ENCODE measurements at regions of chr19 and their contacts with region 1.

Region 1: GRCh38 chr19:54248016-54248601 is 5.5 kb upstream of the LILRA6 start:
- H3K4me3 Mint-ChIP-seq: peak overlapping the region; percentile 64
- H3K27ac Mint-ChIP-seq: peak overlapping the region; percentile 91
- H3K4me1 Mint-ChIP-seq: peaks cover 69% of the 10 kb centered on the region
- H3K27me3 Mint-ChIP-seq: peaks cover 16% of the 10 kb centered on the region

Region 2: DNA sequence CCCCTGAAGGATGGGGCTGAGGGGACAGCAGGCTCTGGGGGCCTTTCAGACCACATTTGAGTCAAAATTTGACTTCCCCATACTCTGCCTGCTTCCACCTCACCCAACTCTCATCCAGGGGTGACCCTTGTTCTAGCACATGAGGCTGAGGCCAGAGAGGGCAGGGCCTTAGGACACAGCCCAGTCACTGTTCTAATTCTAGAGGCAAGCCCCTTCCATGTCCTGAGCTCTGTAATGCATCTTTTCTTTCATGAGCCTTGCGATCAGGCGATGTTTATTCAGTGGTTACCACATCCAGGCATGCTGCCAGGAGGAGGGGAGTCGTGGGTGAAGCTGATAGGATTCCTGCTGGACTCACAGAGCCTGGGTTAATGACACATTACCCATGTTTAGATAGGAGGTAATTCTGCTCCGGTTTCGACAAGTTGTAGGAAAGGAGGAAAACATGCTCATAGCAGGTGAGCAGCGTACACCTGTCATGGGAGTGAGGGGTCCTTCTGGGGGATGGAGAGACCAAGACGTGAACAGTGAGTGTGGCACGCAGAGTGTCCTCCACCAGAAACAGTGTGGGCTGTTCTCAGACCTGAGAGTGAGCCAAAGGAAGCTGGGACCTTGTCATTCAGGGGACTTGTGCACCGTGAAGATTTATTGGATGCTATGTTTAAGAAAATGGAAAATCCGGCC is 38.2 kb before region 1 on chr19:
- intact Hi-C with region 1: loop called (anchors 5 kb)
- H3K4me3 Mint-ChIP-seq: peak overlapping the region; percentile 61
- H3K27ac Mint-ChIP-seq: peak overlapping the region; percentile 94
- H3K4me1 Mint-ChIP-seq: peaks cover 80% of the 10 kb centered on the region
- H3K27me3 Mint-ChIP-seq: no peaks in the 10 kb centered on the region

Region 3: GRCh38 chr19:54218960-54219661 is 29.0 kb before region 1 on chr19:
- intact Hi-C with region 1: loop called (anchors 2 kb)
- H3K4me3 Mint-ChIP-seq: no peak overlapping the region
- H3K27ac Mint-ChIP-seq: no peak overlapping the region
- H3K4me1 Mint-ChIP-seq: peaks cover 63% of the 10 kb centered on the region
- H3K27me3 Mint-ChIP-seq: no peaks in the 10 kb centered on the region

Region 4: GRCh38 chr19:54551950-54552912 is 304.1 kb after region 1 on chr19:
- intact Hi-C with region 1: no loop called
- H3K4me3 Mint-ChIP-seq: no peak overlapping the region
- H3K27ac Mint-ChIP-seq: no peak overlapping the region
- H3K4me1 Mint-ChIP-seq: peaks cover 17% of the 10 kb centered on the region
- H3K27me3 Mint-ChIP-seq: peaks cover 43% of the 10 kb centered on the region

Measured in dendritic cell treated with granulocyte-macrophage colony-stimulating factor and Interleukin-4, amounts not matched to agents 40 ng/mL and 50 ng/mL, for 4 days (primary cell).